ENCODE measurements at regions of chr7 and their contacts with region 1.

Region 1: GRCh38 chr7:86904949-86905834 is 154.3 kb downstream of the ELAPOR2 start:
- DNase-seq: no peak
- H3K4me3 ChIP-seq: no peak overlapping the region
- CTCF ChIP-seq: peak; percentile 53

Region 2: GRCh38 chr7:85890244-85890811 is 1014.9 kb before region 1 on chr7:
- CTCF ChIA-PET with region 1: interaction called, 17 read pairs
- POLR2A ChIA-PET with region 1: no interaction called
- DNase-seq: no peak
- H3K4me3 ChIP-seq: no peak overlapping the region
- CTCF ChIP-seq: peak; percentile 26